ENCODE measurements at regions of chr11 and their contacts with region 1.

Region 1: DNA sequence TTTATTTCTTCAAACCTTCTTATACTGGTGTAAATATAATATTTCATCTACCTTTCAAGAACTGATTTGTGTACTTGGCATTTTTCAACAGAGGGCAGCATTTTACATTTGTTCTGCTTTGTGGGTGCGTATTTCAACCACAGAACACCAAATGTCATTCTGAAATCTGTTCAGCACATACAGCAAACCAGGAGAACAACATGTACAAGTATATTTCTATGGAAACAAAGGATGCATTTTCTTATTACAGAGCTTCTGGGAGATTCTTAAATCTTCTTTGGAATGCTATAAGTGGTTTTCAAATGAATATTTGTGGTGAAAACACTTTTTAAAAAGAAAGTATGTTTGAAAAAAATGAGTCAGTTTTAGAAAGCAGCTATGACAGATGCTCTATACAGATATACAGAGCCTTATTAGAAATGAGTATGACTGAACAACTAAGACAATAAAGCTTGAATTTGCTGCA is 946.0 kb downstream of the FAM181B start:
- DNase-seq: peak; percentile 9
- H3K4me3 Mint-ChIP-seq: no peak overlapping the region
- H3K27ac Mint-ChIP-seq: no peak overlapping the region
- H3K4me1 Mint-ChIP-seq: peaks cover 15% of the 10 kb centered on the region
- H3K27me3 Mint-ChIP-seq: no peaks in the 10 kb centered on the region

Region 2: GRCh38 chr11:81596704-81597103 is 190.9 kb before region 1 on chr11:
- CTCF ChIA-PET with region 1: no interaction called
- POLR2A ChIA-PET with region 1: no interaction called
- intact Hi-C with region 1: no loop called
- DNase-seq: no peak
- H3K4me3 Mint-ChIP-seq: no peak overlapping the region
- H3K27ac Mint-ChIP-seq: no peak overlapping the region
- H3K4me1 Mint-ChIP-seq: no peaks in the 10 kb centered on the region
- H3K27me3 Mint-ChIP-seq: no peaks in the 10 kb centered on the region

Region 3: GRCh38 chr11:81749245-81749644 is 38.4 kb before region 1 on chr11:
- CTCF ChIA-PET with region 1: no interaction called
- POLR2A ChIA-PET with region 1: no interaction called
- intact Hi-C with region 1: no loop called
- DNase-seq: no peak
- H3K4me3 Mint-ChIP-seq: no peak overlapping the region
- H3K27ac Mint-ChIP-seq: no peak overlapping the region
- H3K4me1 Mint-ChIP-seq: no peaks in the 10 kb centered on the region
- H3K27me3 Mint-ChIP-seq: peaks cover 6% of the 10 kb centered on the region

Region 4: DNA sequence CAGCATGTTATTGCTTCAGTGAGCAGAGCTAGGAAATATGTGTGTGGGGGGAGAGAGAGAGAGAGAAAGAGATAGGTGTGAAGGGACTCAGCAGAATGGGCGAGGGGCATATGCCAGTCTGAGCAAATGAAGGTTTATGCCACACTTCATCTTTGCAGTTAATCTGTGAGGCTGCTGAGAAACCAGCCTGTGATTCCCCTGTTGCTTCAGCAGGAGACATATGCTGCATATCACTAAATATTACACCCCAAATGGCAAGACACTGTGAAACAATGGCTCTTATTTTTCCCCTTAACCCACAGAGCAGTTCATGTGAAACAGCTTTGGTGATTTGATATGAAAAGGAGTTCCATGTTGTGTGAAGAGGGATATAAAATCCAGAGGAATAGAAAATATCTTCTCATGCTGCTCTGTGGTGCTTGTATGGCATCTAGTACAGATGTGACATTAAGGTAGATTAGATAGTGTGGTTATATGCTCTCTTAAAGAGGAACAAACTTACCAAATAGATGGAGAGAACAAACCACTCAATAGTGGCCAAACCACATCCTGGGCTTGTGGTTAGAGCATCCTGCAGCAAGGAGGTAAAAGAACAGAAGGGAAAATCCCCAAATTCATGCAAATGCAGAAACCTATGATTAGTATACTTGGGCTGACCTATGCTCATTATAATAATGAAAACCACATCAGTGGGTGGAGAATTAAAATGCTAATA is 81.9 kb after region 1 on chr11:
- CTCF ChIA-PET with region 1: interaction called, 4 read pairs
- POLR2A ChIA-PET with region 1: no interaction called
- intact Hi-C with region 1: loop called (anchors 1 kb)
- DNase-seq: peak; percentile 93
- H3K4me3 Mint-ChIP-seq: peak overlapping the region; percentile 68
- H3K27ac Mint-ChIP-seq: peak overlapping the region; percentile 79
- H3K4me1 Mint-ChIP-seq: peaks cover 41% of the 10 kb centered on the region
- H3K27me3 Mint-ChIP-seq: peaks cover 5% of the 10 kb centered on the region

Region 5: GRCh38 chr11:81963018-81963417 is 175.4 kb after region 1 on chr11:
- CTCF ChIA-PET with region 1: interaction called, 9 read pairs
- POLR2A ChIA-PET with region 1: no interaction called
- intact Hi-C with region 1: loop called (anchors 5 kb)
- DNase-seq: no peak
- H3K4me3 Mint-ChIP-seq: no peak overlapping the region
- H3K27ac Mint-ChIP-seq: no peak overlapping the region
- H3K4me1 Mint-ChIP-seq: peaks cover 18% of the 10 kb centered on the region
- H3K27me3 Mint-ChIP-seq: no peaks in the 10 kb centered on the region

Region 6: GRCh38 chr11:82038153-82038552 is 250.5 kb after region 1 on chr11:
- CTCF ChIA-PET with region 1: interaction called, 3 read pairs
- POLR2A ChIA-PET with region 1: no interaction called
- intact Hi-C with region 1: loop called (anchors 10 kb)
- DNase-seq: no peak
- H3K4me3 Mint-ChIP-seq: no peak overlapping the region
- H3K27ac Mint-ChIP-seq: no peak overlapping the region
- H3K4me1 Mint-ChIP-seq: no peaks in the 10 kb centered on the region
- H3K27me3 Mint-ChIP-seq: no peaks in the 10 kb centered on the region

Region 7: DNA sequence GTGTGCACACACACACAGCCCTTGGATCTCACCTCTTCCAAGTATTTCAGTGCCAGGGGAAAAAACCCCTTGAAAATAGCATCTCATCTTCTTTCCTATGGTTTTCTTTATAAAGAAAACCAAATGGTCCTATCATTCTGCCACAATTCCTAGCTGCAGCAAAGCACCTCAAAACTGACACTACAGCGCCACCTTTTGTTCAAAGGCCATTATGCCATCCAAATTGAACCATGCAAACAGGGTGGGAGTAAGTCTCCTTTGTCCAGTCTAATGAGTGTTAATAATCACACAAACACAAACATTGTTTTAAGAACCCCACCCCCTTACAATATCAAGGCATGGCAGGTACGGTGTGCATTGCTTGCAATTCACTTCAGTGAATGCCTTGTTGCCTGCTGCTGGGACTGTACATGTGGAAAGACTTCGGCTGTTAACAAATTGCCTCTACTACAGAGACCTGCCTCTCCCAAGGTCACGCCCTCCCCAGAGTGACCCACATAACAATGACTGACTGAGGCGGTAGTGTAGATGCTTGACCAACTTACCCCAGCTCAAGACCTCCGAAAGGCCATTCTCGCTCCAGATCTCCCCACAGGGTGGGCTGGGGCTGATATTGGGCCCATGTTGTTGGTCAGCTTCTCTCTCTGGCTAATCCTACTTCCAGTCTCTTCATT is 914.4 kb after region 1 on chr11:
- CTCF ChIA-PET with region 1: no interaction called
- POLR2A ChIA-PET with region 1: no interaction called
- intact Hi-C with region 1: loop called (anchors 10 kb)
- DNase-seq: peak; percentile 29
- H3K4me3 Mint-ChIP-seq: no peak overlapping the region
- H3K27ac Mint-ChIP-seq: no peak overlapping the region
- H3K4me1 Mint-ChIP-seq: no peaks in the 10 kb centered on the region
- H3K27me3 Mint-ChIP-seq: peaks cover 3% of the 10 kb centered on the region